GM10248 (cell line): ENCODE measurements at regions of chr14 and their contacts with region 1.

Region 1: GRCh38 chr14:95527387-95528002 is 7.4 kb upstream of the GLRX5 start:
- DNase-seq: peak; percentile 42
- CTCF ChIP-seq: peak; percentile 54

Region 2: DNA sequence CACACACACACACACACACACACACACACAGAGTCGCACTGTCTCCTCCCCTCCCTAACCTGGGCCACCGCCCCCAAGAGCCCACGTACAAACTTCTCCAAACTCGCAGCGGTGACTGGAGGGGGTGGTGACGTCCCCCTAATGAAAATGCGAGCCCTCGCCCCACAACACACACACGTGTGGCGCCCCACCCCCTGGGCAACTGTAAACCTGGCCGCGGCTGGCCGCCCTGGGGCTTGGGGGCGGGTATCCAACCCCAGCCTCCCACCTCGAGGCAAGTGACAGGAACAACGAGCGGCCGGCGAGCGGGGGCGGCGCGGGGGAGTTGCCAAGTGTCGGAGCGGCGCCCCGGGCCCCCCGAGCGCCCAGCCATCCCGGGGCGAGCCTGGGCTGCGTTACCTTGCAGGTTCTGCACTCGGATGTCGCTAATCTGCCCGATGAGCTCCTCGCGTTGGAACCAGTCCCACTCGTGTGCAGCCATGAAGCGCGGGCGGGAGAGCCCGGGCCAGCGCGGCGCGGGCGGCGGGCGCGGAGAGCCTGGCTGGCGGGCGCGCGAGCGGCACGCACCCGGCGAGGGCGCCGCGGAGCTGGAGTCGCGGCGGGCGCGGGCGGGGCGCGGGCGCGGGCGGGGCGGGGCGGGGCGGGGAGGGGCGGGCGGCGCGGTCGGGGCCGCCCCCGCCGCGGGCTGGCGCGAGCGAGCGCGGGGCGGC is 208.0 kb before region 1 on chr14 and contains the start of gene CLMN:
- CTCF ChIA-PET with region 1: no interaction called
- POLR2A ChIA-PET with region 1: no interaction called
- DNase-seq: peak; percentile 77
- CTCF ChIP-seq: peak; percentile 1

Region 3: DNA sequence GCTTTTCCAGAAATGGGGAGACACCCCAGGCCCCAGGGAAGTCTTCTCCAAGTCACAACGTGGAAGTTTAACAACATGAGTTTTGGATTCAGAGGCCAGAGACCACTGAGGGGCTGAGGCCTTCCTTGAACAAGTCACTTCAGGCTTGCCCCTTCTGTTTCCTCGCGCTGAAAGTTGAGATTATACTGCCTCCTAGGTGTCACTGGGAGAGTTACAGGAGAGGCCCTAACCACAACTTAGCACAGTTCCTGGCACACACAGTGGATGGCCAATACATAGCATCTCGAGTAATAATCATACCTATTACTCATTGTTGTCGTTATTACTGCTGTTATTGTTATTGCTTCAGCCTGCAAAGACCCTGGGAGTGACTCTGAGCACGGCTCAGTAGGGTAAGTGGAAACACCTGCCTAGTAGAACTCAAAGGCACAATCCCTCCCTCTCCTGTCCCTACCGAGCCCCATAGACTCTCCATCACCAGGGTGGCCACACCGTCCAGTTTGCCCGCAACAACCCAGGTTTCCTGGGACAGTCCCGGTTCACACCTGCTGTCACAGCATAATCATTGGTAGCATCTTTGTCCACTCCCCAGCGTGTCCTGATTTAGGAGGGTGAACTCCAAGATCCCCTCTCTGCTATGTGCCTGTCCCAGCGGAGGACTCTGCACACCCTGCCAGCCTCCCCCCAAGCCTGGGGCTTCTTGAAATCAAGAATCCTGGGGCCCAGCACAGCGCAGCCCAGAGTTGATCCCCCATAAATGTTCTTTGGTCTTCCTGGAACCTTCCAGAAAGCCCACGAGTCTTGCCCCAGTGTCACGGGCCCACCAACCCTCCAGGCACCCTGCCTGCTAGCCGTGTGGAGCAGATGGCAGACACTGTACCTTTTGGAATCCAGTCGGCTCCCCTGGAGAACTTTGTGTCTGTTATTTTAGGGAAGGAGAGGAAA is 96.0 kb before region 1 on chr14:
- CTCF ChIA-PET with region 1: interaction called, 31 read pairs
- POLR2A ChIA-PET with region 1: no interaction called
- DNase-seq: no peak
- CTCF ChIP-seq: peak; percentile 29

Region 4: DNA sequence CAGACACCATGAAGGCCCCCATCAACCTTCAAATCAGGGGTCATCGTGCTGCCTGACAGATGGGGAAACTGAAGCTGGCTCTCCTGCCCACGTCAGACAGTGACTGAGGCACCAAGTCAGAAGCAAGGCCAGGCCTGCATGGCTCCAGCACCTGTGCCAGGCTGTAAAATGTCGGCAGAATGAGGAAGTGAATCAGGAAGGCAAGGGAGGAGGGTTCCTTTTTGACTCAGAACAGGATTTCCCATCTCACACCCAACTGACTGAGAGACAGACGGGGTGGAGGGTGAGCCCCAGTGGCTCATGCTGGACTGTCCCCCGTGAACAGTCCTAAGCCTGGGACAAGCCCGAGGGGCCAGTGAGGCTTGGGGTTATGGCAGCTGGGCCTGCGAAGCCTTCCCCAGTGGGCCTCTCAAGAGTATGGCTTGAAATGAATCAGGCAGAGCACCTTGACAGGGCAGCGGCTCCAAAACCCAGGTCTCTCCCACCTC is 31.9 kb before region 1 on chr14:
- CTCF ChIA-PET with region 1: interaction called, 11 read pairs
- POLR2A ChIA-PET with region 1: no interaction called
- DNase-seq: peak; percentile 82
- CTCF ChIP-seq: no peak

Region 5: DNA sequence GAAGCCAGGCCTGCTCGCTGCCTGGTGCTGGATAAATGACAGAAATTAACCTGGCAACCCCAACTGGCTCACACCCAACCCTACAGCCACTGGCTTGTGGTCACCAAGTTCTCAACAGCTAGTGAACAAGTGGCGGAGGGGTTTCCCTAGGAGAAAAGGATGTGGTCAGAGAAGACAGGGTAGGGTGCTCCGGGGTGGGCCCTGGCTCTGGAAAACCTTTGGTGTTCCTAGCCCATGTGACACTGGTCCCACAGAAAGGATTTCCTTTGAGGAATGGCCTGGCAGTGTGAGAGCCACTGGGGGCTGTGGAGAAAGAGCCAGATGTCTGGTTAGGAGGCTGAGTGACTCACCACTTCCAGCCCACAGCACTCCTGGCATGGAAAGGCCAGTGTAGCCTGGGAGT is 19.8 kb before region 1 on chr14:
- CTCF ChIA-PET with region 1: interaction called, 110 read pairs
- POLR2A ChIA-PET with region 1: no interaction called
- DNase-seq: no peak
- CTCF ChIP-seq: no peak

Region 6: DNA sequence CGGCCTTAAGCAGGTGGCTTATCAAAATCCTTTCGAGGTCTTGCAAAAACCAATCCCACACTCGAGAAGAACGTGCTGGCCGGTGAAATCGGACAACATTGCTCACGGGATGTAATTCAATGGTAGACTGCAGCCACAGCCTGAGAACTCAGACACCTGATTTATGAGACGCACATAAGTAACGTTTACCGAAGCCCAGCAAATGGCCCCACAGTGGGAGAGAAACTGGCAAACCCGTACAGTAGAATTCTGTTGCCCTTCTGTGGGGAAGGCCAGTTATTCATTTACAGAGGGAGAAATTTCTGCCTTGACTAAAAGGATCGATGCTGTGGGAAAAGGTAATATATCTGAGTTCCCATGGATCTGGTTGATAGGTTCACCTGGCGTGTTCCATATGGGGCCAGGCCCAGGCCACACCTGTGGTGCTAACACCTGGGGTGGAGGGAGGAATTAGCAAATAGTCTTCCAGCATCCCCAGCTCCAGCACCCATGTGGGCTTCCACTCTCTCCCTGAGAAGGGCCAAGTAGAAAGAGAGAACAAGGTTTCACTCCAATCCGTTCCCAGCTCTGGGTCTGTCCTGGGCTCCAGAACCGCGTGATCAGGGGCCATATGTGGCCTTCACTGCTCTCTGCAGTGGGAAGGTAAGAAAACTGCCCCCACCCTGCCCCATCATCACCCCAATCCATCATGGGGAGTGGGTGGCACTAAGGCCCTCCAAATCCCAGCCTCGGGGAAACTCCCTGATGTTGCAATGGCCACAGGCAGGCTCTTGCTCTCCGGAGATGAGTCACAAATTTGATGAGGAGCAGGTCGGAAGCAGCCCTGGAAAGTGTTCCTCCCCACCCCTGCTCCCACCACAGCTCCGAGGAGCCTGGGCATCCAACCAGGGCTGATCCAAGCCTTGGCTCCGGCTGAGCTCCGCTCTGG is 741.2 kb after region 1 on chr14:
- CTCF ChIA-PET with region 1: no interaction called
- POLR2A ChIA-PET with region 1: no interaction called
- DNase-seq: no peak
- CTCF ChIP-seq: no peak